Common myeloid progenitor, CD34-positive (primary cell): ENCODE measurements at regions of chr21 and their contacts with region 1.

Region 1: DNA sequence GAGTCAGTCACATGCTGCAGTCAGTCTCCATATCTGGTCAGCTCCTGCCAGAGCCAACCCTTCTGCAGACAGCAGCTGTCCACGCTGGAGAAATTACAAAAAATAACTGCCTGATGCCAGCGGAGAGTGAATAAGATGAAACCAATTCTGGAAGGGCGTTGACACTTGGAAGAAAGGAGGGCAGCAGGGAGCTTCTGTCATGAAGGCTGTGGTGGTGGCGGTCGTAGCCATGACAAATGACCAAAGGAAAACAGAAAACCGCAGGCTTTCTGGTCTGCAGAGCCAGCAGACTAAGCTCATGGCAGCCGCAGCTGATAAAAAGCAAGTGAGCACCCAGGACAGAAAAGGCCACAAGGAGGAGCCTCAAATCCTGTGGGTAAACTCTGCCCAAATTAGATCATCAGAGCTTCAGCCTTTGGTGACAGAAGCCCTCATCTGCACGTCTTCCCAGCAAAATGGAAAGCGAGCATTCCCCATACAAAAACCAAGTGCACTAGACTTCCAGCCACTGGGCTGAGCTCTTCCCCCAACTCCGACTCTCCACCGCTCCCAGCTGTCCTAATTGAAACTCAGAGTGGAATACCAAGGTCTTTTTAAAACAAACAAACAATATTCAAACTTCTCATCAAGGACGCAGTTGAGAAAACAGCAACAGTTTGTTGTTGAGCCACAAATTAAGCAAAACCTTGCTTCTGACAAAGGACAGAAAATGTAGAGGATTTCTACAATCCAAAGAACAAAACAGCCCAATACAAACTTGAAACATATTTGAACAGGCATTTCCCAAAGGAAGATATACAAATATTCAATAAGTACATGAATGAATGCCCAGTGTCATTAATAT is 28.7 kb downstream of the RSPH1 start:
- DNase-seq: peak; percentile 74 to 86 (median 82)
- H3K4me3 ChIP-seq: peak overlapping the region in 1 of 7 experiments; percentile 25
- H3K27ac ChIP-seq: no peak overlapping the region
- H3K4me1 ChIP-seq: peaks cover 39 to 74% (median 65%) of the 10 kb centered on the region in 4 experiments
- H3K27me3 ChIP-seq: no peaks in the 10 kb centered on the region

Region 2: DNA sequence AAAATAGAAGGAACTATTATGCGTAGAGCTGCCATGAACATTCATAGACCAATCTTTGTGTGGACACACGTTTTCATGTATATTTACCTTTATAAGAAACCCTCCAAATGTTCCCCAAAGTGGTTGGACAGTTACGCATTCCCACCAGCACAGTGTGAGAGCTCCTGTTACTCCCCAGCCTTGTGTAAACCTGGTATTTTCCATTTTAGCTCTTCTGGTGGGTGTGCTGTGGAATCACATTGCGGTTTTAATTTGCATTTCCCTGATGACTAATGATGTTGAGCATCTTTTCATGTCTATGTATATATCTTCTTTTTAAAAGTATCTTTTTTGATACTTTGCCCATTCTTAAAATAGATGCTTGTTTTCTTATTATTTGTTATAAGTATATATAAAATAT is 66.8 kb before region 1 on chr21:
- CTCF ChIA-PET with region 1: no interaction called
- POLR2A ChIA-PET with region 1: no interaction called
- DNase-seq: no peak
- H3K4me3 ChIP-seq: no peak overlapping the region
- H3K27ac ChIP-seq: no peak overlapping the region
- H3K4me1 ChIP-seq: peaks cover 0 to 9% (median 4%) of the 10 kb centered on the region in 4 experiments
- H3K27me3 ChIP-seq: no peaks in the 10 kb centered on the region

Region 3: GRCh38 chr21:42486531-42486930 is 19.2 kb after region 1 on chr21:
- CTCF ChIA-PET with region 1: interaction called, 13 read pairs
- POLR2A ChIA-PET with region 1: no interaction called
- DNase-seq: peak; percentile 63 to 98 (median 96)
- H3K4me3 ChIP-seq: no peak overlapping the region
- H3K27ac ChIP-seq: peak overlapping the region; percentile 1 to 56
- H3K4me1 ChIP-seq: peaks cover 14 to 67% (median 35%) of the 10 kb centered on the region in 4 experiments
- H3K27me3 ChIP-seq: no peaks in the 10 kb centered on the region

Region 4: GRCh38 chr21:42493104-42494055 is 26.0 kb after region 1 on chr21:
- CTCF ChIA-PET with region 1: interaction called, 12 read pairs
- POLR2A ChIA-PET with region 1: no interaction called
- DNase-seq: no peak
- H3K4me3 ChIP-seq: no peak overlapping the region
- H3K27ac ChIP-seq: no peak overlapping the region
- H3K4me1 ChIP-seq: peaks cover 16 to 63% (median 37%) of the 10 kb centered on the region in 4 experiments
- H3K27me3 ChIP-seq: no peaks in the 10 kb centered on the region